Activated CD8-positive, alpha-beta T cell treated with anti-CD3 and anti-CD28 coated beads, Interleukin-2, amount 10 ng/mL, durations not matched to agents 7 days and 5 days (primary cell): ENCODE measurements at regions of chr10 and their contacts with region 1.

Region 1: DNA sequence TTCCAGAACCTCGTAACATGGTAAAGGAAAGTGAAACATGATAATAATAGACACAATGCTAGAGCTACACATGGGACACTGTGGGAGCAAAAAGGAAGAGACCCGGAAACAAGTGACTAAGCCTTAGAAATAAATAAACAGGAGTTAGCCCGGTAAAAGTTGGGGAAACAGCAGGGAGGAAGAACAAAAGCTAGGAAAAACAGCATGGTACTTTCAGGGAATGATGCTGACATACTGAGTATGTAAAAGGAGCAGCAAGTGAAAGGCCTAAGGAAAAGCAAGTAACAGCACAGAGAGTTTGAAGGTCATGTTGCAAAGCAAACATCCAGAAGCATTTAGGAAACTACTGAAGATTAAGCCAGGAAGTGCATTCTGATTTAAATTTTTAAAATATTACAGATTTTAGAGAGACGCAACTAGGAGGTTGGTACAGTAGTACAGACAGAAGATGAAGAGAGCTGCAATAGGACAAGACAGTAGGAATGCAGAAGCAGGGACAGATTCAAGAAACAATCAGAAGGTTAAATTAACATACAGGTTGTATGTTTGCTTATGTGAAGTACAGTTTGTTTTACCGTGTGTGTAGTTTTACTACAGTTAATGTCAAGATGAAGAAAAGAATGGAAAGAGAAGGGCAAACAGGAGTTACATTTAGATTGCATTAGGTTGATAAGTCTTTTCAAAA is 63.7 kb downstream of the ARHGAP12 start:
- DNase-seq: no peak
- ATAC-seq: no peak
- H3K4me3 Mint-ChIP-seq: no peak overlapping the region
- H3K27ac Mint-ChIP-seq: no peak overlapping the region
- H3K4me1 Mint-ChIP-seq: peaks cover 4% of the 10 kb centered on the region
- H3K27me3 Mint-ChIP-seq: no peaks in the 10 kb centered on the region

Region 2: GRCh38 chr10:31851216-31851615 is 13.8 kb before region 1 on chr10:
- CTCF ChIA-PET with region 1: interaction called, 10 read pairs
- POLR2A ChIA-PET with region 1: interaction called, 3 read pairs
- DNase-seq: no peak
- ATAC-seq: no peak
- H3K4me3 Mint-ChIP-seq: no peak overlapping the region
- H3K27ac Mint-ChIP-seq: no peak overlapping the region
- H3K4me1 Mint-ChIP-seq: no peaks in the 10 kb centered on the region
- H3K27me3 Mint-ChIP-seq: no peaks in the 10 kb centered on the region

Region 3: GRCh38 chr10:31921031-31921430 is 56.1 kb after region 1 on chr10:
- CTCF ChIA-PET with region 1: interaction called, 10 read pairs
- POLR2A ChIA-PET with region 1: no interaction called
- DNase-seq: no peak
- ATAC-seq: peak; percentile 62
- H3K4me3 Mint-ChIP-seq: peak overlapping the region; percentile 34
- H3K27ac Mint-ChIP-seq: peak overlapping the region; percentile 60
- H3K4me1 Mint-ChIP-seq: peaks cover 52% of the 10 kb centered on the region
- H3K27me3 Mint-ChIP-seq: no peaks in the 10 kb centered on the region

Region 4: DNA sequence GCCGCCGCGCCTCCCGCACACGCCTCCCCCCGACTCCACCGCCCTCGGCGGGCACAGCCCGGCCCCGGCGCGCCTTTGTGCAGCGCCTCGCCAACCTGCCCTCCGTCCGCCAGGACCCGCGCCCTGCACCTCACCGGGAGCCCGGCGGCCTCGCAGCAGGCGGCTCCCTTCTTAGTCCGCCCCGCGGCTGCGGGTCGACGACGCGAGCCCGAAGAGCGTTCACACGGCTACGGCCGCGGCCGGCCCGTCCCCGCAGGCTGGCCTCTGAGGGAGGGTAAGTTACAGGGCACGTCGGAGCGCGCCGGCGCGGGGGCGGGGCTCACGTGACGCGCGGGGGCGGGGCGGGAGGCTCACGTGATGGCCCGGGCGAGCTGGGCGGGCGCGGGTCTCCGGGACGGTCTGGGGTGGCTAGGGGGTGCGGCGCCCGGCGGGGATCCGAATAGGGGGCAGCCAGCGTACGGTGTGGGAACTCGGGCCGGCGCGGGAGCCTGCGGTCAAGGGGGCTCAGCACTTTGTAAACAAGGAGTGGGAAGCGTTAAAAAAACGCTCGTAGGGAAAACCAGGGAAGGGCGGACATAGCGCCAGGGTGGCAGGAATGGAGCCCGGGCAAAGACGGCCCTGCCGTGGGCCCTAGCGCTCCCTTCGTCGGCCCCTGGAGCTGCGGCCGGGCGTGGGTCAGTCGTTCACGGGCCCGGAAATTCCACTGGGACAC is 63.7 kb after region 1 on chr10 and contains the start of gene ARHGAP12:
- CTCF ChIA-PET with region 1: interaction called, 11 read pairs
- POLR2A ChIA-PET with region 1: no interaction called
- DNase-seq: peak; percentile 81
- ATAC-seq: peak; percentile 77
- H3K4me3 Mint-ChIP-seq: peak within 1 kb of the TSS; percentile 85
- H3K27ac Mint-ChIP-seq: peak within 1 kb of the TSS; percentile 72
- H3K4me1 Mint-ChIP-seq: peaks cover 49% of the 10 kb centered on the region
- H3K27me3 Mint-ChIP-seq: peaks cover 8% of the 10 kb centered on the region
- total RNA-seq, gene ARHGAP12: 4.9 to 5.5 TPM

Region 5: GRCh38 chr10:31977440-31978155 is 112.6 kb after region 1 on chr10:
- CTCF ChIA-PET with region 1: interaction called, 11 read pairs
- POLR2A ChIA-PET with region 1: no interaction called
- DNase-seq: no peak
- ATAC-seq: peak; percentile 69
- H3K4me3 Mint-ChIP-seq: peak overlapping the region; percentile 2
- H3K27ac Mint-ChIP-seq: no peak overlapping the region
- H3K4me1 Mint-ChIP-seq: peaks cover 33% of the 10 kb centered on the region
- H3K27me3 Mint-ChIP-seq: peaks cover 9% of the 10 kb centered on the region

Region 6: DNA sequence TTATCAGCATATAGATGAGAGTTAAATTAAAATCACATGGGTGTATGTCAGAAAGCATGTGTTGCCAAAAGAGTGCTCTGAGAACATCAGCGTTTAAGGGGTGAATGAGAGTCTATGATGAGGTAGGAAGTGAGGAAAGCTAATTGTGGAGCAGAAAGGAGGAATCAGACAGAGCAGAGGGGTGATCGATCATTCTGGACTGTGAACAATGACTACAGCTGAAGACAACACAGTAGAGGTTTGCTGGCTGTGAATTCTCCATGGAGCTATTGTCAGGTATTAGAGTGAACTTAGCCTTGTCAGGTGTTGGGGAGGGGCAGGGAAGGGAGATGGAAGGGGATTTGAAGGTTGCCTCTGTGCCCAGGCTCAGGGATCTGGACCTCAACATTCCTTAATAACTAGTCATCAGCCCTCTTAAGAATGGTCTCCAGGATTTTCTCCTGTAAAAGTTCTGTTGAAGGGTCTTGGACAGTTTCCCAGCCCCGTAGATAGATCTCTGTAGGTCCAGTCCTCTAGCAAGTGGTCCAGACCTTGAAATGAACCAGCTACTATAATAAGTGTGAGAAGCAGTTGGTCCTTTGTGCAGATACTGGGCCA is 134.2 kb after region 1 on chr10:
- CTCF ChIA-PET with region 1: interaction called, 54 read pairs
- POLR2A ChIA-PET with region 1: no interaction called
- DNase-seq: no peak
- ATAC-seq: no peak
- H3K4me3 Mint-ChIP-seq: no peak overlapping the region
- H3K27ac Mint-ChIP-seq: no peak overlapping the region
- H3K4me1 Mint-ChIP-seq: peaks cover 15% of the 10 kb centered on the region
- H3K27me3 Mint-ChIP-seq: no peaks in the 10 kb centered on the region

Region 7: DNA sequence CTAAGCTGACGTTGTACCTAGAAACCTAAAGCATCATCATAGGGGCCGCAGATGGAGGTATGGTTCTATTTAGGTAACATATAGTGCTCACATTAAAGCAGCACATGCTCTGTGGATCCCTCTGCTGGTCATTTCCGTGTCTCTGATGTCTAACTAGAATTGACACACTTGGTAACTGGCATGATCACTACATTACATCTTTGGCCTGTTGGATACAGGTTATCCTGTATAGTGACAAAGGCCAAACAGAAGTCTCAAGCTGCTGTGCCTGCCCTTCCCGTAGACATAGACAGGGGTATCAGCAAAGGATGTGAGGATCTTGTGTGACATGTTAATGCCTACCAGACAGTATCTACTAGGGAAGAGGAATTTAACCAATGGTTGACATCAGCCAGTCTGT is 140.1 kb after region 1 on chr10:
- CTCF ChIA-PET with region 1: interaction called, 54 read pairs
- POLR2A ChIA-PET with region 1: no interaction called
- DNase-seq: peak; percentile 65
- ATAC-seq: peak; percentile 74
- H3K4me3 Mint-ChIP-seq: no peak overlapping the region
- H3K27ac Mint-ChIP-seq: no peak overlapping the region
- H3K4me1 Mint-ChIP-seq: peaks cover 15% of the 10 kb centered on the region
- H3K27me3 Mint-ChIP-seq: no peaks in the 10 kb centered on the region